ENCODE measurements at regions of chr21 and their contacts with region 1.

Region 1: GRCh38 chr21:42233067-42233961 is 14.4 kb downstream of the ABCG1 start:
- DNase-seq: peak; percentile 98
- H3K4me3 ChIP-seq: no peak overlapping the region
- H3K27ac ChIP-seq: peak overlapping the region; percentile 86 to 90 (median 90)
- H3K4me1 ChIP-seq: peaks cover 0 to 86% (median 64%) of the 10 kb centered on the region in 4 donors
- H3K27me3 ChIP-seq: no peaks in the 10 kb centered on the region
- CTCF ChIP-seq: peak in 3 of 4 experiments; percentile 15 to 24 (median 19)
- EP300 ChIP-seq: peak; percentile 74 to 95 (median 85)
- POLR2A ChIP-seq: no peak

Region 2: GRCh38 chr21:41419911-41420862 is 813.1 kb before region 1 on chr21:
- intact Hi-C with region 1: loop called (anchors 10 kb)
- DNase-seq: peak; percentile 92
- H3K4me3 ChIP-seq: peak overlapping the region; percentile 62 to 69 (median 67)
- H3K27ac ChIP-seq: peak overlapping the region; percentile 84 to 90 (median 86)
- H3K4me1 ChIP-seq: peaks cover 0 to 12% (median 8%) of the 10 kb centered on the region in 4 donors
- H3K27me3 ChIP-seq: no peaks in the 10 kb centered on the region
- CTCF ChIP-seq: no peak
- EP300 ChIP-seq: no peak
- POLR2A ChIP-seq: no peak

Region 3: DNA sequence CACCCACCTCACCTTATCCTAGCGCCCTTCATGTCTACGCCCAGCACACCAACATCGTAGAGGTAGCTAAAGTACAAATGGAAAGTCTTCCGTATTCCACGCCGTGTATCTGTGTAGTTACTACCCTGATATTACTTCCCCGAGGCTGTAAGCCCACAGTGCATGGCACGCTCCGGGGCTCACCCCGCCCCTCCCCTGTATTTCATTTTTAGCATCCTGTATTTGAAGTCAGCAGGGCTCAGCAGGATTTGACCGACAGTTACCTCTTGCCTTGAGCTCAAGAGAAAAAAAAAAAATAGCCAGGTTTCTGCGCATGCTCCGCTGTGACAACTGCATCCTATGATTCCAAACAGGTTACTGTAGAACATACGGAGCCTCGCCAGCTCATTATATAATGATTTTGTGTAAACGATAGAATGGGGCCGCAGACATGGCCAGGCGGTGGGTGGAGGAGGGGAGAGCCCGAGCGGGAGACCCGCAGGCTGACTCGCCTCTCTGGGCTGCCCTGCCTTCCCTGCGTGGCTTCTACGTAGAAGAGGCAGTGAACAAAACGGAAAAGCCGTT is 13.1 kb before region 1 on chr21:
- intact Hi-C with region 1: loop called (anchors 1 kb)
- DNase-seq: peak; percentile 89
- H3K4me3 ChIP-seq: peak overlapping the region; percentile 66 to 74 (median 70)
- H3K27ac ChIP-seq: peak overlapping the region; percentile 77 to 91 (median 82)
- H3K4me1 ChIP-seq: peaks cover 0 to 42% (median 33%) of the 10 kb centered on the region in 4 donors
- H3K27me3 ChIP-seq: no peaks in the 10 kb centered on the region
- CTCF ChIP-seq: no peak
- EP300 ChIP-seq: peak in 3 of 4 donors; percentile 6 to 84 (median 52)
- POLR2A ChIP-seq: no peak

Region 4: GRCh38 chr21:42258153-42258884 is 25.0 kb after region 1 on chr21:
- intact Hi-C with region 1: loop called (anchors 2 kb)
- DNase-seq: peak; percentile 82
- H3K4me3 ChIP-seq: no peak overlapping the region
- H3K27ac ChIP-seq: no peak overlapping the region
- H3K4me1 ChIP-seq: peaks cover 0 to 39% (median 31%) of the 10 kb centered on the region in 4 donors
- H3K27me3 ChIP-seq: no peaks in the 10 kb centered on the region
- CTCF ChIP-seq: peak; percentile 19 to 83 (median 68)
- EP300 ChIP-seq: no peak
- POLR2A ChIP-seq: no peak

Region 5: DNA sequence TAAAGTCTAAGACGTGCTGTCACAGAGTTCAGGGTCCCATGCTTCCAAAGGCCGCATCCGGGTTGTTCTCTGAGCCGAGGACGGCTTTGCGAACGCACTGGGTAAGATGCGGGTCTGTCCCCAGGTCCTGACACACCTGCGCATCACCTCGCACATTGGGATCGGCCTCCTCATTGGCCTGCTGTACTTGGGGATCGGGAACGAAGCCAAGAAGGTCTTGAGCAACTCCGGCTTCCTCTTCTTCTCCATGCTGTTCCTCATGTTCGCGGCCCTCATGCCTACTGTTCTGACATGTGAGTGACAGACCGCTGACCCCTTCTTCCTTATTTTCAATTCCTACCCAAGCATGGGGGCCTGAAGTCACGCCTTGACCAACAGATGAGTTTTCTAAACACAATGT is 56.6 kb after region 1 on chr21:
- intact Hi-C with region 1: no loop called
- DNase-seq: no peak
- H3K4me3 ChIP-seq: no peak overlapping the region
- H3K27ac ChIP-seq: no peak overlapping the region
- H3K4me1 ChIP-seq: no peaks in the 10 kb centered on the region
- H3K27me3 ChIP-seq: no peaks in the 10 kb centered on the region
- CTCF ChIP-seq: no peak
- EP300 ChIP-seq: no peak
- POLR2A ChIP-seq: no peak

Measured in sigmoid colon (tissue), 7 donors.